Spleen (tissue), 13 donors: ENCODE measurements at regions of chr12 and their contacts with region 1.

Region 1: DNA sequence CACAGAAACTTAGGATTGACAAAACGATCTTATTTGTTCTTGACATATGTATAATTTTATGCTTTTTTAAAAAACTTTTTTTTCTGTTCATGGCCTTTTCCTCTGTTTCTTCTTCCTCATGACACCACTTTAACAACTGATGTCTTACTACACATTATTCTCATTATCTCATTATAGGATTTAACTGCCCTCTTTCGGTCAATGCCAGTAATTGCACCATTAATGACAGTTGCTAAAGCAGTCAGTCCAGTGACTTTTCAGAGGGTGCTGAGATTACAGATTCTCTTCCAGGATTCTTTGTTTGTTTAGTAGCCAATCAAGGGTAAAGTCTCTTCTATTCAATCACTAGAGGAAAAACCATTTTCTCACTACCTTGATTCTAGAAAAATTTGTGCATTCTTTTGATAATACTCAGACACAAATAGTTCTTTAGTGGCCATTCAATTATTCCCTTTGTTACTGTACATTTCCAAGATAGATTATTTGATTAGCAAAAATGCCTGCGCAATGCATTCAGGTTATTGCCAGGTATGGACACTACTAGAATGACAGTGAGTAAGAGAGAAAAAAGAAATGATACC is 50.1 kb downstream of the KLRG1 start:
- DNase-seq: no peak
- H3K4me3 ChIP-seq: no peak overlapping the region
- H3K27ac ChIP-seq: no peak overlapping the region
- H3K4me1 ChIP-seq: peaks cover 0 to 20% (median 1%) of the 10 kb centered on the region in 6 donors
- H3K27me3 ChIP-seq: no peaks in the 10 kb centered on the region
- CTCF ChIP-seq: peak; percentile 61 to 89 (median 84)
- POLR2A ChIP-seq: no peak

Region 2: GRCh38 chr12:8549381-8549780 is 490.1 kb before region 1 on chr12:
- intact Hi-C with region 1: loop called (anchors 5 kb)
- DNase-seq: no peak
- H3K4me3 ChIP-seq: no peak overlapping the region
- H3K27ac ChIP-seq: no peak overlapping the region
- H3K4me1 ChIP-seq: peaks cover 0 to 20% (median 4%) of the 10 kb centered on the region in 6 donors
- H3K27me3 ChIP-seq: peaks cover 0 to 12% (median 0%) of the 10 kb centered on the region in 7 donors
- CTCF ChIP-seq: no peak
- POLR2A ChIP-seq: no peak

Region 3: DNA sequence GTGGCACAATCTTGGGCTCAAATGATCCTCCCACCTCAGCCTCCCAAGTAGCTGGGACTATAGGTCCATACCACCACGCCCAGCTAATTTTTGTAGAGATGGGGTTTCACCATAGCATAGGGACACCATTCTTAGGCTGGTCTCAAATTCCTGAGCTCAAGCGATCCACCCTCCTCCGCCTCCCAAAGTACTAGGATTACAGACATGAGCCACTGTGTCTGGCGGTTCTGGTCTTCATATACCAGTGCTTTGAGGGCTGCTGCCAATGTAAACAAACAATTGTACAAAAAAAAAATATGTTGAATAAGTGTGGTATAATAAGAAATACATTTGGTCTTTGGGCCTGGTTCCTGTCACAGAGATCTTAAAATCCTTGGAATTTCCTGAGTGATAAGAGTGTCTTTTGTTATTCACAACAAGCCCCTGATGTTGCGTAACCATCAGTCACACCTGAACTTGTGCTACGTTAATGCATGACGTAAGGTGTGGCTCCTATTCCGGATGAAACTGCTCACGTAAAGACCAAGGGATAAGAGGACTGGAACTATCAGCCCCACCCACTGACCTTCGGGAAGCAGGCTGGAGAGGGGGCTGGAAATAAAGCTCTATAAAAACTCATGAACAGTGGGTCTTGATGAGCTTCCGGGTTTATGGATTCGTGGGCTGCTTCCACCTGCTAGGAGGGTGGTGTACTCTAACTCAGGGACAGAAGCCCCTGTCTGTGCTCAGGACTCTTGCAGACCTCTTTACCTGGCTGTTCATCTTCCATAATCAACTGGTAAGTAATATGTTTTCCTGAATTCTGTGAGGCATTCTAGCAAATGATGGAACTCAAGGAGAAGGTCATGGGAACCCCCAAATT is 358.2 kb before region 1 on chr12:
- intact Hi-C with region 1: loop called (anchors 5 kb)
- DNase-seq: no peak
- H3K4me3 ChIP-seq: no peak overlapping the region
- H3K27ac ChIP-seq: peak overlapping the region in 1 of 8 donors; percentile 1
- H3K4me1 ChIP-seq: peaks cover 0 to 19% (median 10%) of the 10 kb centered on the region in 6 donors
- H3K27me3 ChIP-seq: no peaks in the 10 kb centered on the region
- CTCF ChIP-seq: no peak
- POLR2A ChIP-seq: no peak

Region 4: DNA sequence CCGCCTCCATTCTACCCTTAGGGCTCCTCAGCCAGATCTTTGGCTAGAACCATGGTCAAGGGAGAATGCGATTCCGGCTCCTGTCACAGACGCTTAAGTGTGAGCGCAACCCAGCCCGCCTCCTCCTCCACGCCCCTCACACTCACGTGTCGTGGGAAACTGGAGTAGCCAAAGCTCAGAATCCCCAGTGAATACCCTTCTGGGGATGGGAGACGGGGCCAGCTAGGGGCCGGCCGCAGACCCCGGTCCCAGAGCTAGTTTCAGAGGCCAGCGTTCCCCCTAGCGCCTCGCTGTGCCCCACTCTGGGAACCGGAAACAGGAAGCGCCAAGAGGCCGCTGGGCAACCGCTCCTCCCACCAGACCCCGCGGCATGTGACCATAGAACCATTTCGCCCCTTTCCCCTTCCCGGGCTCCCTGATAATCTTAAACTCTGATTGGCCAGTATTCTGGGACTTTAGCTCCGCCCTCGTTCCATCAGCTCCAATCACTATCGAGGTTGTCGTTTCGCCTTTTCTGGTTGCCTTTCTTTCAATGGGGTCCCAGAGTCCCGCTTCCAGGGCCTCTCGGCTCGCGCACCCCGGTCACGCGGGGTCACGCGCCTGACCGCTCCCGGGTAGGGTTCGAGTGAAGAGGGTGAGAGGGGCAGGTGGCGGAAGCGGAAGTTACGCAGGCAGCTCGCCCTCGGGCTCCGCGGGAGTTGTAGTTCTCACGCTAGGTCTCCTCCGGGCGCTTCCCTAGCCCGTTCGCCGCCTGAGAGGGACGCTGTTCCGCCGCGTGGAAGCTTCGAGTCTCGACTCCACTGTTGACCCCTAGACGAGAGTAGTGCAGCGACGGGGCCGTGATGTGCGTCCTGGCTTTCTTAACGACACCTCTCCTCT is 89.9 kb before region 1 on chr12 and contains the start of gene M6PR:
- intact Hi-C with region 1: loop called (anchors 5 kb)
- DNase-seq: peak; percentile 98
- H3K4me3 ChIP-seq: peak within 1 kb of the TSS; percentile 60 to 95 (median 88)
- H3K27ac ChIP-seq: peak within 1 kb of the TSS; percentile 96 to 98 (median 97)
- H3K4me1 ChIP-seq: peaks cover 18 to 78% (median 39%) of the 10 kb centered on the region in 6 donors
- H3K27me3 ChIP-seq: no peaks in the 10 kb centered on the region
- CTCF ChIP-seq: peak; percentile 27 to 73 (median 56)
- POLR2A ChIP-seq: peak in 1 of 3 donors; percentile 78
- total RNA-seq, gene M6PR: 146 to 217 (median 192) TPM

Region 5: GRCh38 chr12:8996682-8997360 is 42.7 kb before region 1 on chr12:
- intact Hi-C with region 1: no loop called
- DNase-seq: no peak
- H3K4me3 ChIP-seq: peak overlapping the region in 1 of 8 donors; percentile 18
- H3K27ac ChIP-seq: peak overlapping the region in 7 of 8 donors; percentile 6 to 78 (median 60)
- H3K4me1 ChIP-seq: peaks cover 0 to 58% (median 17%) of the 10 kb centered on the region in 6 donors
- H3K27me3 ChIP-seq: no peaks in the 10 kb centered on the region
- CTCF ChIP-seq: no peak
- POLR2A ChIP-seq: no peak

Region 6: DNA sequence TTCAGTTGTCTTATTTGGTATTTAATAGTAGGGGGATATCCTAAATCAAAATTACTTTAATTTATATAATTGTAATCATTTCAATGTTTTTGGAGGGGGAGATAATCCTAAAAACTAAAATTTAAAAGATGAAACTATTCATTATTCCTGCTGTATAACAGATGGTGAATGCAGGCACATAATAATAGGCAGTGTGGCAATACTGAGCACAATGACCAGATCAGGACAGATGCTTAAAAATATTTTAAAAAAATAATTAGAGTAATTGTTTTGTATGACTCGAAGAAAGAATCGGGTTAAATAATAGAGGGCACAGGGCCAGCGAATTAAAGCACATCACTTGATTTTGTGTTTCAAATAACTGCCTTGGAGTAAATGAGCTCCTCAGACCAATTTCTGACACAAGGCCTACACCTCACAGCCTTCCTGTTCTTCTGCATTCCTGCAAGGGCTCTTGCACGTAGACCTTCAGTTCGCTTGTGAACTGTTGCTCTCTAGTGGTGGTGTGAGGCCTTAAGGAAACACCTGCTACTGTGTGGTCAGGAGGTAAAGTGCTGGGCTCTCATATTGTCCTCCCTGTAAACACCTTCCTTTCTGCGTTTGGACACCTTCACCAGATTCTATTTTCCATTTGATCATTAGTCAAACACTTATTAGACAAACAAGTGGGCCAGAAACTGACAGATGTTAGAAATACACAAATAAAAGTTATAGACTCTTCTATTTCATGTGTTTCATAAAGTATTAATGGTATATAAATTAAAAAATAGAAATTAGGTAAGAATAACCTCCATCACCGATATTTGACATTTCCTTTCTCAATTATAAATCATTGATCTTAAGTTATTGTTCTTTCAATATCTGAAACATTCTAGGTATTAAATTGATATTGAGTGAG is 758.5 kb after region 1 on chr12:
- intact Hi-C with region 1: no loop called
- DNase-seq: peak; percentile 61
- H3K4me3 ChIP-seq: no peak overlapping the region
- H3K27ac ChIP-seq: peak overlapping the region in 1 of 8 donors; percentile 6
- H3K4me1 ChIP-seq: peaks cover 5 to 55% (median 36%) of the 10 kb centered on the region in 6 donors
- H3K27me3 ChIP-seq: no peaks in the 10 kb centered on the region
- CTCF ChIP-seq: peak; percentile 35 to 76 (median 67)
- POLR2A ChIP-seq: no peak